HAP-1 (cell line): ENCODE measurements at regions of chr16 and their contacts with region 1.

Region 1: DNA sequence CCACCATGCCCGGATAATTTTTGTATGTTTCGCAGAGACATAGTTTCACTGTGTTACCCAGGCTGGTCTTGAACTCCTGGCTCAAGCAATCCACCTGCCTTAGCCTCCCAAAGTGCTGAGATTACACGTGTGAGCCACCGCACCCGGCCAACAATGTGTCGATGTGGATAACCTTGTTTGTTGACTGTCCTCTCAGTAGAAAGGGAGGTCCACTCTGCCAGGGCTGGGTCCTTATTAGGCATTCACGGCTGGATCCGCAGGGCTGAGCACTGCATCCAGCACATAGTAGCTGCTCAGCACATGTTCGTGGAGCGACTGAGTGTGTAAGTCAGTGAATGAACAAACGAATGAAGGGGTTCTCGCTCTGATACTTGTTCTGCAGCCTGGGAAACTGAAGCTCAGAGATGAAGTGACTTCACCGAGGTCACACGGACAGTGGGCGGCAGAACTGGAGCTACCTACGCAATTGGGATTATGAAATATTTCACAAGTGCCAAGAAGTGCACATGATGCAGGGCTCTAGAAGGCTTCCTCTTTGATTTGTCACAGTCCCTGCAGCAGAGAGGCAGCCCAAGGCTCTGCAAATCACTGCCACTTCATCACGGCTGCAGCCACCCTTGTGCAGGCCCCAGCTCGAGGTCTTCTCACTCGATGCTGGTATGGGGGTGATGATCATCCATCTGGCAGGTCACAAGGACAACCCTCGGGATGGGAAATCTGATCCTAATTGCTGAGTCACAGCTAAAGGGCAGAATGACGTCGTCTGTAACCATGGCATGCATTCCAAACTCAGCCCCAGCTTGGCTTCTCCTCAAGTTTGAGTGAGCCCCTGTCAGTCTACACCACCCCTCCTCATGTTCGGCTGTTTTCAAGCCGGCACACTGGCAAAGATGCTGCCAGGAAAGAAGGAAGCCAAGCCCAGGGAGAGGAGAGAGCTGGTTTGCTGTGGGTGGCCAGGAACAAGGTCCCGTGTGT is 28.0 kb upstream of the SNN start:
- DNase-seq: no peak
- H3K4me3 ChIP-seq: no peak overlapping the region
- H3K4me1 ChIP-seq: no peaks in the 10 kb centered on the region
- H3K27me3 ChIP-seq: no peaks in the 10 kb centered on the region

Region 2: GRCh38 chr16:11396241-11397048 is 243.8 kb before region 1 on chr16:
- in situ Hi-C with region 1: loop called (anchors 10 kb)
- DNase-seq: peak; percentile 71 to 89
- H3K4me3 ChIP-seq: no peak overlapping the region
- H3K4me1 ChIP-seq: no peaks in the 10 kb centered on the region
- H3K27me3 ChIP-seq: no peaks in the 10 kb centered on the region

Region 3: DNA sequence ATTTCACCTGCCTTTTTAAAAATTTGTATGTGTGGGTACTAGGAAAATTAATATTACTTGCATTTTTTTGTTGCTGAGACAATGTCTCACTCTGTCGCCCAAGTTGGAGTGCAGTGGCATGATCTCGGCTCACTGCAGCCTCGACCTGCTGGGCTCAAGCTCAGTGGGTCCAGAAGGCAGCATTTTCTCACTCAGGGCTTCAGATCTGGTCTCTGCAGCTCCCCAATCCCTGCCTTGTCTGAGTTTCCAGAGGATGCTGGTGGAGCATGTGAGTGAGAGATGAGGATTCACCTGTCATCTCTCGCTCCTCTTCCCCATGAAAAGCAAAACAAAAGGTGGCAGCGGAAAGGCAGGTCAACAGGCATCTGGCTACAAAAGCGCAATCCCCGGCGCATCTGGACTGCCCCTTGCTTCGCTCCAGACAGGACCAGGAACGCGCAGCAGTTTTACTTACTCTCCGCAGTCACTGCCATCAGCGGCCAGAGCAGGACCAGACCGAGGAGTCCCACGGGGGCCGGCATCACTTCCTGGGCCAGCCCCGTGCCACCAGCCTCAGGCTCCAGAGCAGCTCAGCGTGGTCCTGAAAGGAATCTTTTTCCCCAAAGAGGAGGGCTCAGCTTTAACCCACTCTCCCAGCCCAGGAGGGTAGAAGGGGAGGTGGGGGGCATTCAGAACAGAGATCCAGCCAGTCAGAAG is 113.4 kb before region 1 on chr16:
- in situ Hi-C with region 1: loop called (anchors 10 kb)
- DNase-seq: no peak
- H3K4me3 ChIP-seq: no peak overlapping the region
- H3K4me1 ChIP-seq: no peaks in the 10 kb centered on the region
- H3K27me3 ChIP-seq: peaks cover 4% of the 10 kb centered on the region; the same call in 1 of the 2 replicates